OCI-LY7 (cell line): ENCODE measurements at regions of chr14 and their contacts with region 1.

Region 1: DNA sequence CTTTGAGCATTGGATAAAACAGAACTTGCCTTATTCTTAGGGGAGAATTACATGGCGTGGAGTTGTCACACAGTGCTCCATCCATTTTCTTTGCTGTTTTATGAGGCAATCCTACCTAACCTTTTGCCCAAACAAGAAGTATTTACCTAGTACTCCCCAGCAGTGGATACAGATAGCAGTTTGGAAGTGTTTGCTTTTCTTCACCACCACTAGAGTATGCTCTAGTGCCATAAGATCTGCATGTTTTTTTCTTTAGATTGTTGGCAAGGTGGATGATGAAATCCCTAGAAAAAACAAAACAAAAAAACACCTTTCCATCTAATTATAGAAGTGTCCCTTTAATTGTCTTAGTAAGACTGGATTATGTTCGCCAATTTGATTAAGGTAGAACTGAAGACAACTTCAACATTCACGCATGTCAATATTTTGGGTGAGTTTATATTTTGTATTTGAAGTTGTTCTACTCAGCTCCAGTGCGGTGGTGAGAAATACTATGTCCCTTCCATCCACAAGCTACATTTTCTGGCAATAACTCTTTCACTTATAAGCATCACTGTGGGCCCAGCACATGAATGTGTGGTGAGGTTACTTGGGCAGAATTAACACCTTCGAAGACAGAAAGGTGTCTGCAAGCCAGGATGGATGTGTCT is 23.6 kb upstream of the TMEM260 start:
- DNase-seq: peak; percentile 31
- H3K4me3 ChIP-seq: no peak overlapping the region
- H3K27ac ChIP-seq: no peak overlapping the region
- H3K4me1 ChIP-seq: no peaks in the 10 kb centered on the region
- CTCF ChIP-seq: peak; percentile 77

Region 2: GRCh38 chr14:56491299-56492285 is 64.5 kb before region 1 on chr14:
- CTCF ChIA-PET with region 1: no interaction called
- POLR2A ChIA-PET with region 1: no interaction called
- intact Hi-C with region 1: no loop called
- DNase-seq: peak; percentile 62
- H3K4me3 ChIP-seq: no peak overlapping the region
- H3K27ac ChIP-seq: no peak overlapping the region
- H3K4me1 ChIP-seq: no peaks in the 10 kb centered on the region
- CTCF ChIP-seq: peak; percentile 79

Region 3: DNA sequence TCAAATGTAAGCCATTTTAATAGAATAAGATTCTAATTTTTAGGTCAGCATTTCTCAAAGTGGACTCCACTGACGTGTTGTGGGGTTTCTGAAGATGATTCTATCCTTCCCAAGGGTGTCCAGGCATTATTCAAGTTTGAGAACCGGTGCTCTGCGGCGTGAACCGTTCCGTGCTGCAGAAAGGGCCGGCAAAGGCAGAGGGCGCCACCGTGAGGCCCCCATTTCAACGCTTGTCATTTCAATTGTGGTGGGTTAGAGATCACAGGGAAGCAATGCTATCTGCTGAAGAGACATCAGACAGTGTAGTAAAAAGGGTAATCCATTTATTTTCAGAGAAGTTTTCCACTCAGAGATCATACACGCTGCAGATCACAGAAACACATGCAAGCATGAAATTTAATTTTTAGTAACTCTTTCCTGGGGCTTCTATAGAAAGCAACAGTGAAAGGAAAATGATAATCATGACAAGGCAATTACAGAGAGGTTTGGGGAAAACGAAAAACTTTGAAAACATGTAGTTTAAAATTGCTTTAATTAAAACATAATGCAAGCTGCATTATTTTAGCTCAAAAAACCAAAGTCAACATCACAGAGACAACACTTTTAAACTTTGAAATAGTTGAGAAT is 511.0 kb after region 1 on chr14:
- CTCF ChIA-PET with region 1: no interaction called
- POLR2A ChIA-PET with region 1: no interaction called
- intact Hi-C with region 1: loop called (anchors 10 kb)
- DNase-seq: peak; percentile 4
- H3K4me3 ChIP-seq: no peak overlapping the region
- H3K27ac ChIP-seq: no peak overlapping the region
- H3K4me1 ChIP-seq: no peaks in the 10 kb centered on the region
- CTCF ChIP-seq: peak; percentile 73

Region 4: GRCh38 chr14:57199921-57200320 is 643.9 kb after region 1 on chr14:
- CTCF ChIA-PET with region 1: no interaction called
- POLR2A ChIA-PET with region 1: interaction called, 3 read pairs
- intact Hi-C with region 1: loop called (anchors 10 kb)
- DNase-seq: no peak
- H3K4me3 ChIP-seq: no peak overlapping the region
- H3K27ac ChIP-seq: no peak overlapping the region
- H3K4me1 ChIP-seq: no peaks in the 10 kb centered on the region
- CTCF ChIP-seq: no peak